IMR-90 (cell line): ENCODE measurements at regions of chr9 and their contacts with region 1.

Region 1: GRCh38 chr9:107504569-107505377 is 15.2 kb upstream of the KLF4 start:
- DNase-seq: peak; percentile 93
- ATAC-seq: peak; percentile 87
- H3K4me3 ChIP-seq: no peak overlapping the region
- H3K27ac ChIP-seq: no peak overlapping the region
- H3K4me1 ChIP-seq: peaks cover 7% of the 10 kb centered on the region
- H3K27me3 ChIP-seq: peaks cover 3% of the 10 kb centered on the region; the same call in 1 of the 2 replicates
- CTCF ChIP-seq: no peak
- POLR2A ChIP-seq: no peak; the same call in 1 of the 2 replicates
- RAD21 ChIP-seq: 0 out of 2 replicates have a peak, but pooled peaks have one; percentile 7

Region 2: DNA sequence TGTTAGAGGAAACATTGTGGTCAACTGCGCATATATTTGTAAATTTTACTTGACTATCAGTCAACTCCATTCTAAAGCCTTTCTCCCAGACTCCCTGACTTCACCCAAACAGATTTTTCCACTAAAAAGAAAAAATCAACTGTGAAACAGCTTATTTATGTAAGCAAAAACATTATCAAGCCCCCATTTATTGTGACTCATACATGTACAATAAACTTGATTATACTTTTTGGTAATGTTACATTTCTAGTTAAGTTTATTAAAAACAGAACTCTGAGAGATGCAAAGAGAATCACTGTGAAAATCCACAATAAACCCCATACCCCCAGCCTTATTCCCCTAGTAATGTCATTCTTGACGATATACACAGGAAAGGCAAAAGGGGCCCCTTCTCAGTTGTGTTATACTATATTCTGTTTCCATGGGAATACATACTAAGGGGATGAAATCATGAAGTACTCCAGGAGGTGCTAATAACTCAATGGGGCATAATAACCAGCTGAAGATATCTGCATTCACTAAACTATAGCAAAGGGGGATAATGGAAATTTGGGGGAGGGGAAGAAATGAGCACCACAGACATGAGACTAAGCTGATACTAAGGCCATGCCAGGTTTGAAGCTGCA is 735.0 kb after region 1 on chr9:
- CTCF ChIA-PET with region 1: no interaction called
- POLR2A ChIA-PET with region 1: interaction called, 13 read pairs
- dilution Hi-C with region 1: no loop called
- in situ Hi-C with region 1: no loop called
- intact Hi-C with region 1: no loop called
- DNase-seq: no peak
- ATAC-seq: no peak
- H3K4me3 ChIP-seq: no peak overlapping the region
- H3K27ac ChIP-seq: no peak overlapping the region
- H3K4me1 ChIP-seq: peaks cover 2% of the 10 kb centered on the region; the same call in 1 of the 2 replicates
- H3K27me3 ChIP-seq: no peaks in the 10 kb centered on the region
- CTCF ChIP-seq: no peak
- POLR2A ChIP-seq: no peak
- RAD21 ChIP-seq: no peak